CD4-positive, alpha-beta T cell (primary cell): ENCODE measurements at regions of chr11 and their contacts with region 1.

Region 1: GRCh38 chr11:111601979-111602864 is at the start of gene SIK2:
- DNase-seq: peak; percentile 75 to 97 (median 84)
- ATAC-seq: peak; percentile 80
- H3K4me3 ChIP-seq: peak within 1 kb of the TSS; percentile 93
- H3K4me3 Mint-ChIP-seq: peak within 1 kb of the TSS; percentile 99
- H3K27ac ChIP-seq: peak within 1 kb of the TSS; percentile 56 to 83
- H3K27ac Mint-ChIP-seq: peak within 1 kb of the TSS; percentile 92
- H3K4me1 ChIP-seq: peaks cover 19% of the 10 kb centered on the region
- H3K4me1 Mint-ChIP-seq: peaks cover 31% of the 10 kb centered on the region
- H3K27me3 ChIP-seq: no peaks in the 10 kb centered on the region
- H3K27me3 Mint-ChIP-seq: no peaks in the 10 kb centered on the region
- CTCF ChIP-seq: peak; percentile 76
- total RNA-seq, gene SIK2: 3.6 to 5.8 TPM

Region 2: DNA sequence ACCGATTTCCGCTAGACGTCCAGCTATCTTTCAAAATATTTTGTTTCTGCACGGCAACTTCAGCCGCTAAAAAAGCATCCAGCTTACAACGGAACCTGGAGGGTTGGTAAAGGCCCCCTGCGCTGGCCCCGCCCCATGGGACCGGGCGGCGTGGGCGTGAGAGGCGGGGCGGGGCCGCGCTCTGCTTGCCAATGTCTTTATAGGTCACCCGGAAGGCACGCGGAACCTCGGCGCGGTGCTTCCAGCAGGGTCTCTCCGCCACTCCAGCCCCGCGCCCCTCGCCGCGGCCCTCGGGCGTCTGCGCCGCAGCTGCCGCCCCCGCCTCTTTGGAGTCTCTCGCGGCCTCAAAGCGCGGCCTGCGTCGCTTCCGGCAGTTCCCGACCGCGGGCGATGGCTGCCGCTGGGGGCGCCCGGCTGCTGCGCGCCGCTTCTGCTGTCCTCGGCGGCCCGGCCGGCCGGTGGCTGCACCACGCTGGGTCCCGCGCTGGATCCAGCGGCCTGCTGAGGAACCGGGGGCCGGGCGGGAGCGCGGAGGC is 1172.4 kb before region 1 on chr11 and contains the start of gene FDX1:
- CTCF ChIA-PET with region 1: no interaction called
- POLR2A ChIA-PET with region 1: no interaction called
- intact Hi-C with region 1: loop called in 1 of 2 experiments (anchors 10 kb)
- DNase-seq: peak; percentile 59 to 92 (median 74)
- ATAC-seq: peak; percentile 80
- H3K4me3 ChIP-seq: peak within 1 kb of the TSS; percentile 95
- H3K4me3 Mint-ChIP-seq: peak within 1 kb of the TSS; percentile 89
- H3K27ac ChIP-seq: peak within 1 kb of the TSS; percentile 73 to 84
- H3K27ac Mint-ChIP-seq: peak within 1 kb of the TSS; percentile 94
- H3K4me1 ChIP-seq: peaks cover 26% of the 10 kb centered on the region
- H3K4me1 Mint-ChIP-seq: peaks cover 50% of the 10 kb centered on the region
- H3K27me3 ChIP-seq: no peaks in the 10 kb centered on the region
- H3K27me3 Mint-ChIP-seq: no peaks in the 10 kb centered on the region
- CTCF ChIP-seq: peak; percentile 32
- total RNA-seq, gene FDX1: 10.2 to 10.6 TPM

Region 3: DNA sequence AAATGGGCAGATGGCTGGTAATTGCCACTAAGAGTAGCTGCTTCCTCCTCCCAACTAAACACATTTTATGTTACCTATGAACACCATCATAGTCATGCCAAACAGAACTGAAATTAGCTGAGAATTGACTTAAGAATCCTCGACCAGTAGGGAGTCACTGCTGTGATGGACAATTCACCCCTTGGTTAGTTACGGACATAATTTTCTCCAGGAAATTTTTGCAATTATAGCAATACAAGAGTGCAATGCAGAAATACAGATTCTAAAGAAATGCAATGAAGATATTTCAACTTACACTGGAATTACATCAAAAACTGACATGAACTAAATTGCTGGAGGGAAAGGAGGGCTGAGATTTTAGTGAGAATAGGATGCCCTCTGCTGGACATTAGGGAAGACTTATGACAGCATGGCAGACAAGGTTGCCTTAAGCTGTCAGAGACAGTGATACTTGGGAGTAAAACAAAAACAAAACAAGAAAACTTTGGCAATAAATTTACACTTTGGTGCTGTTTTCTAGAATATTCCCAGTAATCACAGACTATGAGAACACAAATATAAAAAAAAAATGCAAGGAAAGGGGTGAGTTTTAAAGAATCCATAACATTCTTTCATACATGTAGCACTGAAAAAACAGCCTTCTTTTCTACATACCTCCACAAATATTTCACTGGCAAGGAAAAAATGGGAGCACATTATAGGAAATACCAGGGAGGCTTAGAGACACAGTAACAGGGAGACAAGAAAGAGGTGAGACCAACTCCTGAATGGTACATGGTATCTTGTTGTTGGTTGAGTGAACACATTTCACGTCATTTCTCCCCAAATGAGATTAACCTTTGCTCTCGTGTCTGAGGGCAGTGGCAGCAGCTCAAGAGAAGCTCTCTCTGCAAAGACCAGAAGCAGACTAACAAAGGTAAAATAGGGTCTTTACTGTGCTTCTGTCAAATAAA is 175.1 kb after region 1 on chr11:
- CTCF ChIA-PET with region 1: interaction called, 7 read pairs
- POLR2A ChIA-PET with region 1: no interaction called
- intact Hi-C with region 1: loop called in 1 of 2 experiments (anchors 5 kb)
- DNase-seq: peak in 5 of 14 experiments; percentile 19 to 80 (median 70)
- ATAC-seq: peak; percentile 93
- H3K4me3 ChIP-seq: no peak overlapping the region
- H3K4me3 Mint-ChIP-seq: no peak overlapping the region
- H3K27ac ChIP-seq: no peak overlapping the region
- H3K27ac Mint-ChIP-seq: no peak overlapping the region
- H3K4me1 ChIP-seq: no peaks in the 10 kb centered on the region
- H3K4me1 Mint-ChIP-seq: no peaks in the 10 kb centered on the region
- H3K27me3 ChIP-seq: no peaks in the 10 kb centered on the region
- H3K27me3 Mint-ChIP-seq: no peaks in the 10 kb centered on the region
- CTCF ChIP-seq: peak; percentile 81

Region 4: DNA sequence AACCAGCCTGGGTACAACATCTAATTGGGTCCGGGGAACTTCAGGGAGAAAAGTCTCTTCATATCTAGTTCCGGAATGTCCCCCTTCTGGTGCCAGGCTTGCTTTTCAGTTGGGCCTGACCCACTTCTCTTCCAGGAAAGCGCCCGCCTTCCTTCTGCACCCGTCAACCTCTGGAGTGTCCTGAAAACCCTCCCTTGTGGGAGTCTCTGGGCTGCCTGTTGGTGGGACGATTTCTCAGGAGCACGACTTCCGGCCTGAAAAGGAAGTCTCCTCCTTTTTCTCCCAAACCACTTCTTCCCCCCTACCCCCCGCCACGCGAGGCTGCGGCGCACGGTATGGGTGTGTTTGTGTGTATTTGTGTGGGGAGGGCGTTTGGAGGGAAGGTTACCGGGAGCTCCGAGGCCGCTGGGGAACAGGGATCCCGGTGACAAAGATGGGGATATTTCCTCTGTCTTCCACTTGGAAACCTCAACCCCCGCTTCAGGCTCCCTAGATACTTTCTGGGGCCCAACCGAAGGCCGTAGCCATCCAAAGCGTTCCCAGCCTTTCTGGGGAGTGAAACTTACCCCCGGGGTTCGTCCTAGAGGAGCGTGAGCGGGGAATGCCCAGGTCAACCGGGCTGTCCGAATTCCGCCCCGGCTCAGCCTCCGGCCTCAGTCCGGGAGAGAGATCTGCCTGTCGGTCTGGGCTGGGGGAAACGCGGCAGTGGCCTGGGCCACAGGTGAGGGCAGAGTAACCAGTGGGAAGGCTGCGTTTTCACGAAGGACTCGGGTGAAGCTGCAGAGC is 472.0 kb after region 1 on chr11 and contains the start of gene NKAPD1:
- CTCF ChIA-PET with region 1: no interaction called
- POLR2A ChIA-PET with region 1: no interaction called
- intact Hi-C with region 1: loop called in 1 of 2 experiments (anchors 5 kb)
- DNase-seq: peak; percentile 65 to 92 (median 74)
- ATAC-seq: peak; percentile 87
- H3K4me3 ChIP-seq: peak within 1 kb of the TSS; percentile 80
- H3K4me3 Mint-ChIP-seq: peak within 1 kb of the TSS; percentile 97
- H3K27ac ChIP-seq: peak within 1 kb of the TSS; percentile 70 to 73
- H3K27ac Mint-ChIP-seq: peak within 1 kb of the TSS; percentile 78
- H3K4me1 ChIP-seq: peaks cover 13% of the 10 kb centered on the region
- H3K4me1 Mint-ChIP-seq: peaks cover 36% of the 10 kb centered on the region
- H3K27me3 ChIP-seq: no peaks in the 10 kb centered on the region
- H3K27me3 Mint-ChIP-seq: peaks cover 27% of the 10 kb centered on the region
- CTCF ChIP-seq: no peak
- total RNA-seq, gene NKAPD1: 14.8 to 16.0 TPM

Region 5: DNA sequence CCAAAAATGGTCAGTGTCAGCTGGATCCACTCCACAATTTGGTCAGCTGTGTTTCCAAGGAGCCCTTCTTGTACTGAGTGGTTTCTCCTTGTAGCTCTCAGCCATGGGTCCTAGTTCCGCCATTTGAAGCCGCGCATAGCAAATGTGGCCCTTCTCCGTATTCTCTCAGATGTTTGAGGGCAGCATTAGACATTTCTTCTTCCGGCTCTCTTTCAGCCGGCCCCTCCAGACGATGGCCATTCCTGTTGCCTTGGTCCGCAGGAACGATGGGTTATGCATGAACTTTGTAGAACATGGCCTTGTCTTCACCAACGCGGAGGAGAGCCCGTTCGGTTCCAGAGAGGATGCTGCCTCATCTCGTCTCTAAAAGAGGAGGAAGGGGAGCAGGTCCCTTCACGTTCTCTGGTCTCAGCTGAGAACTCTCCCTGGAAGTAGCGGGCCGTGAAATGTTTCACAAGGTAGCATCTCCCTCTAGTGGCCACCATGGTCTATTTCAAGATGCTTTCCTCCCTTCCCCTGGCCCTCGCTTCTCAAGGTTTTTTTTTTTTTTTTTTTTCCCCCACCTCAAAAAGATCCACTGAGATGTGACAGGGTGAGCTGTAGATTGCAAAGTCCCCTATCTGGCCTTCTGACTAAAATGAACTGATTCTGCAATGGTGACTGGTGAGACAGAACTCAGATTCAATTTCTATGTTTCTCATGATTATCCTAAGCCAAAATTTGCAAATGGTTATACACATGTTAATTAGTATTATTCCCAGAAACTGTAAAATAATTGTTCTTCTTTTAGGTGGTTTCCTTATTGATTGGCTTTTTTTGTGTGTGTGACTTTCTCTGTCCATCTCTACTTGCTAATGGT is 678.3 kb after region 1 on chr11:
- CTCF ChIA-PET with region 1: no interaction called
- POLR2A ChIA-PET with region 1: no interaction called
- intact Hi-C with region 1: loop called in 1 of 2 experiments (anchors 10 kb)
- DNase-seq: peak; percentile 38 to 90 (median 56)
- ATAC-seq: peak; percentile 90
- H3K4me3 ChIP-seq: peak overlapping the region; percentile 61
- H3K4me3 Mint-ChIP-seq: peak overlapping the region; percentile 92
- H3K27ac ChIP-seq: no peak overlapping the region
- H3K27ac Mint-ChIP-seq: peak overlapping the region; percentile 64
- H3K4me1 ChIP-seq: peaks cover 22% of the 10 kb centered on the region
- H3K4me1 Mint-ChIP-seq: peaks cover 17% of the 10 kb centered on the region
- H3K27me3 ChIP-seq: no peaks in the 10 kb centered on the region
- H3K27me3 Mint-ChIP-seq: no peaks in the 10 kb centered on the region
- CTCF ChIP-seq: peak; percentile 44